Gastrocnemius medialis (tissue), 4 donors: ENCODE measurements at regions of chr10 and their contacts with region 1.

Region 1: GRCh38 chr10:128324077-128324827 is 198.0 kb upstream of the MKI67 start:
- DNase-seq: peak; percentile 24 to 51
- ATAC-seq: peak; percentile 83 to 86
- H3K4me3 ChIP-seq: no peak overlapping the region
- H3K27ac ChIP-seq: no peak overlapping the region
- H3K4me1 ChIP-seq: no peaks in the 10 kb centered on the region
- H3K27me3 ChIP-seq: no peaks in the 10 kb centered on the region
- CTCF ChIP-seq: peak in 4 of 5 experiments; percentile 9 to 41 (median 32)
- POLR2A ChIP-seq: no peak

Region 2: GRCh38 chr10:127872871-127873600 is 451.2 kb before region 1 on chr10:
- in situ Hi-C with region 1: no loop called
- intact Hi-C with region 1: loop called (anchors 10 kb)
- DNase-seq: no peak
- ATAC-seq: no peak
- H3K4me3 ChIP-seq: no peak overlapping the region
- H3K27ac ChIP-seq: no peak overlapping the region
- H3K4me1 ChIP-seq: no peaks in the 10 kb centered on the region
- H3K27me3 ChIP-seq: peaks cover 0 to 5% (median 0%) of the 10 kb centered on the region in 3 donors
- CTCF ChIP-seq: no peak
- POLR2A ChIP-seq: no peak

Region 3: GRCh38 chr10:128419466-128420019 is 95.3 kb after region 1 on chr10:
- in situ Hi-C with region 1: no loop called
- intact Hi-C with region 1: loop called (anchors 1 kb)
- DNase-seq: peak in 1 of 2 donors; percentile 22
- ATAC-seq: peak; percentile 89 to 90
- H3K4me3 ChIP-seq: no peak overlapping the region
- H3K27ac ChIP-seq: no peak overlapping the region
- H3K4me1 ChIP-seq: no peaks in the 10 kb centered on the region
- H3K27me3 ChIP-seq: no peaks in the 10 kb centered on the region
- CTCF ChIP-seq: peak; percentile 10 to 44 (median 34)
- POLR2A ChIP-seq: no peak

Region 4: GRCh38 chr10:128530301-128530700 is 206.0 kb after region 1 on chr10:
- in situ Hi-C with region 1: loop called in 2 of 4 experiments (anchors 10 to 25 kb)
- intact Hi-C with region 1: loop called (anchors 2 kb)
- DNase-seq: no peak
- ATAC-seq: no peak
- H3K4me3 ChIP-seq: no peak overlapping the region
- H3K27ac ChIP-seq: no peak overlapping the region
- H3K4me1 ChIP-seq: peaks cover 0 to 5% of the 10 kb centered on the region in 2 donors
- H3K27me3 ChIP-seq: no peaks in the 10 kb centered on the region
- CTCF ChIP-seq: peak in 4 of 5 experiments; percentile 5 to 43 (median 30)
- POLR2A ChIP-seq: no peak